Natural killer cell (primary cell): ENCODE measurements at regions of chr19 and their contacts with region 1.

Region 1: DNA sequence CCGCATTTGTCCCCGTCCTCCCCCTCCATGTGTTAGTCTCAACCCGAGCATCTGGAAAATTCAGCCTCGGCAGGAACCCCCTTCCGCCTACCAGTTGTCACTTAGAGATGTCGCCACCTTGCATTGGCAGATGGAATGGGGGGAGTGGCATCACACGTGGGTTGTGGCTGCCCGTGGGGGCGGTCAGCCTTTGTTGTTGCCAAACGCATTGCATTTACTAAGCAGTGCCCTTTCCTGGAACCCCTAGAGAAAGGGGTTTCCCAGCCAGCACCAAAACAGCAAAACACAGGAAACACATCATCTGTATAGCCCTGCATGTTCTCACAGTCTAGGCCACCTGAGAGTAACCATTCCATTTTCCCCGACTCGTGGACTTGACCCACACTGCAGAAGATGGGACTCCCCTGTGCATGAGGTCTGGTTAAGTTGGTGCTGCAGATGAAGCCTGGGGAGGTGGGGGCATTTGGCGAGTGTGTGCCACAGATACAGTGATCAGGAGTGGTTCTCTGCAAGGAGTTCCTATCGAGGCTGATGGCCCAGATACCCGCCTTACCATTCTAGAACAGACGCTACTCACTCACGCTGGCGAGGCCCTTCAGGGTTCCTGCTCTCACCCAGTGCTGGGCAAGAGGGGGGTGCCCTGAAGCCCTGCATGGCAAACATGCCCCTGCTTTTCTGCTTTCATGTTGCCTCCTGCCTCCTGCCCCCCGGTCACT is 38.3 kb downstream of the TMED1 start:
- DNase-seq: peak; percentile 94 to 96
- ATAC-seq: peak; percentile 77 to 91 (median 78)
- H3K4me3 ChIP-seq: peak overlapping the region; percentile 20
- H3K4me3 Mint-ChIP-seq: peak overlapping the region; percentile 96
- H3K27ac ChIP-seq: peak overlapping the region; percentile 98
- H3K27ac Mint-ChIP-seq: peak overlapping the region; percentile 93 to 100
- H3K4me1 ChIP-seq: peaks cover 69% of the 10 kb centered on the region
- H3K4me1 Mint-ChIP-seq: peaks cover 47 to 54% of the 10 kb centered on the region in 2 donors
- H3K27me3 ChIP-seq: no peaks in the 10 kb centered on the region
- H3K27me3 Mint-ChIP-seq: no peaks in the 10 kb centered on the region
- CTCF ChIP-seq: no peak

Region 2: DNA sequence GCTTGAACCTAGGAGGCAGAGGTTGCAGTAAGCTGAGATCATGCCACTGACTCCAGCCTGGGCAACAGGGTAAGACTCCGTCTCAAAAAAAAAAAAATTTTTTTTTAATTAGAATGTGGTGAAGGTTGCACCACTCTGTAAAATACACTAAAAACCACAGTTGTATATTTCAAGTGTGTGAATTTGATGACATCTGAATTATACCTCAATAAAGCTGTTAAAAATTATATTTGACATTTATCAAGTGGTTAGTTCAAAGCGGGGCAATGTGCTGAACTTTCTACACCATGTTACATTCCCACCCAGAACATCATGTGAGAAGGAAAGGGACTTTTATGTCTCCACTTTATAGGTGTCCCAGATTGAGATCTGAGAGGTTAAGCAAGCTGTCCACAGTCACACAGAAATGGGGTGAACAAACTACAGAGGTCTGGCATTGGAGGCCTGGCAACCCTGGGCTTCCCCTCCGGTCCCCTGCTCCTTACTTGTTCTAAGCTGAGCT is 274.5 kb before region 1 on chr19:
- intact Hi-C with region 1: loop called (anchors 1 kb)
- DNase-seq: peak; percentile 57 to 82
- ATAC-seq: peak; percentile 65 to 88 (median 80)
- H3K4me3 ChIP-seq: no peak overlapping the region
- H3K4me3 Mint-ChIP-seq: peak overlapping the region; percentile 76
- H3K27ac ChIP-seq: peak overlapping the region; percentile 92
- H3K27ac Mint-ChIP-seq: peak overlapping the region; percentile 86 to 91
- H3K4me1 ChIP-seq: peaks cover 65% of the 10 kb centered on the region
- H3K4me1 Mint-ChIP-seq: peaks cover 41 to 42% of the 10 kb centered on the region in 2 donors
- H3K27me3 ChIP-seq: no peaks in the 10 kb centered on the region
- H3K27me3 Mint-ChIP-seq: no peaks in the 10 kb centered on the region
- CTCF ChIP-seq: no peak

Region 3: GRCh38 chr19:10653715-10654492 is 143.8 kb before region 1 on chr19 and contains the start of gene ILF3:
- intact Hi-C with region 1: loop called (anchors 1 kb)
- DNase-seq: peak; percentile 100
- ATAC-seq: peak; percentile 75 to 93 (median 76)
- H3K4me3 ChIP-seq: peak within 1 kb of the TSS; percentile 100
- H3K4me3 Mint-ChIP-seq: peak within 1 kb of the TSS; percentile 91
- H3K27ac ChIP-seq: peak within 1 kb of the TSS; percentile 100
- H3K27ac Mint-ChIP-seq: peak within 1 kb of the TSS; percentile 97 to 98
- H3K4me1 ChIP-seq: peaks cover 39% of the 10 kb centered on the region
- H3K4me1 Mint-ChIP-seq: peaks cover 31 to 40% of the 10 kb centered on the region in 2 donors
- H3K27me3 ChIP-seq: no peaks in the 10 kb centered on the region
- H3K27me3 Mint-ChIP-seq: no peaks in the 10 kb centered on the region
- CTCF ChIP-seq: no peak
- total RNA-seq, gene ILF3: 329 to 365 (median 332) TPM

Region 4: DNA sequence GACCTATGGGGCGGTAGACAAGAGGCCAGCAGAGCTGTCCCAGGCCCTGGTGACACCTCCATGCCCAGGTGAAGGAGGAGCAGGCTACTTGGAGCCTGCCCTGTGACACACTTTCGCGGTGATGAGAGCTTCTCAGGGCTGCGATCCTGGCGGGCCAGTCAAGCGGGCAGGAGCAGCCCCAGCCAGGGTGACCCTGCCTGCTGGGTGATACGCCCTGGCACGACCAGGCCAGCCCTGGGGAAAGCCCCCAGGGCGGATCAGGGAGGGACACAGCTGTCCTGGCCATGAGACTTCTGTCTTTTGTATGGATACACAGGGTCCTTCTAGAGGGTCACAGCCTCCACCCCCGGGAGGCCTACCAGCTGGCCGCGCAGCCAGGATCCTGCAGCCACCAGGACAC is 66.8 kb before region 1 on chr19:
- intact Hi-C with region 1: loop called (anchors 1 kb)
- DNase-seq: peak in 1 of 2 donors; percentile 36
- ATAC-seq: peak in 2 of 3 donors; percentile 22 to 27
- H3K4me3 ChIP-seq: no peak overlapping the region
- H3K4me3 Mint-ChIP-seq: peak overlapping the region; percentile 84
- H3K27ac ChIP-seq: peak overlapping the region; percentile 76
- H3K27ac Mint-ChIP-seq: peak overlapping the region; percentile 96 to 99
- H3K4me1 ChIP-seq: peaks cover 58% of the 10 kb centered on the region
- H3K4me1 Mint-ChIP-seq: peaks cover 28 to 32% of the 10 kb centered on the region in 2 donors
- H3K27me3 ChIP-seq: no peaks in the 10 kb centered on the region
- H3K27me3 Mint-ChIP-seq: no peaks in the 10 kb centered on the region
- CTCF ChIP-seq: no peak

Region 5: GRCh38 chr19:10815969-10816692 is 18.4 kb after region 1 on chr19:
- intact Hi-C with region 1: loop called (anchors 1 kb)
- DNase-seq: no peak
- ATAC-seq: no peak
- H3K4me3 ChIP-seq: no peak overlapping the region
- H3K4me3 Mint-ChIP-seq: no peak overlapping the region
- H3K27ac ChIP-seq: peak overlapping the region; percentile 56
- H3K27ac Mint-ChIP-seq: peak overlapping the region; percentile 92 to 93
- H3K4me1 ChIP-seq: peaks cover 63% of the 10 kb centered on the region
- H3K4me1 Mint-ChIP-seq: peaks cover 31 to 75% of the 10 kb centered on the region in 2 donors
- H3K27me3 ChIP-seq: no peaks in the 10 kb centered on the region
- H3K27me3 Mint-ChIP-seq: no peaks in the 10 kb centered on the region
- CTCF ChIP-seq: no peak

Region 6: DNA sequence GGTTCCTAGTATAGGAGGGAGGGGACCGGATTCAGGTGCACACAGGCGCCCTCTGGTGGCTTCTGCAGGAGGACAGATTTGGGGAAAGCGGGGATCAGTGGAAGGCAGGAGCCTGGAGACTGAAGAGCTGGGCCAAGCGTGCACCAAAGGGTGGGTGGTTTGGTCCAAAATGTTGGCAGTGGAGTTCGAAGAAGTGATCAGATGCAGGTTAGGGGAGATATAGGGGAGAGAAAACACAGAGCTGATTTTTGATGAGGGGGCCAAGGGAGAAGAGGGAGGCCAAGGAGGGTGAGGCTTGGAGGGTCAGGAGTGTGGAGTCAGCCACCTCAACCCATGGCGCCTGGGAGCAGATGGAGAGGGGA is 66.8 kb after region 1 on chr19:
- intact Hi-C with region 1: loop called (anchors 2 kb)
- DNase-seq: peak; percentile 75 to 90
- ATAC-seq: peak; percentile 87 to 93 (median 87)
- H3K4me3 ChIP-seq: no peak overlapping the region
- H3K4me3 Mint-ChIP-seq: peak overlapping the region; percentile 5
- H3K27ac ChIP-seq: no peak overlapping the region
- H3K27ac Mint-ChIP-seq: peak overlapping the region in 1 of 2 donors; percentile 68
- H3K4me1 ChIP-seq: peaks cover 18% of the 10 kb centered on the region
- H3K4me1 Mint-ChIP-seq: peaks cover 9 to 10% of the 10 kb centered on the region in 2 donors
- H3K27me3 ChIP-seq: no peaks in the 10 kb centered on the region
- H3K27me3 Mint-ChIP-seq: no peaks in the 10 kb centered on the region
- CTCF ChIP-seq: peak; percentile 90

Region 7: DNA sequence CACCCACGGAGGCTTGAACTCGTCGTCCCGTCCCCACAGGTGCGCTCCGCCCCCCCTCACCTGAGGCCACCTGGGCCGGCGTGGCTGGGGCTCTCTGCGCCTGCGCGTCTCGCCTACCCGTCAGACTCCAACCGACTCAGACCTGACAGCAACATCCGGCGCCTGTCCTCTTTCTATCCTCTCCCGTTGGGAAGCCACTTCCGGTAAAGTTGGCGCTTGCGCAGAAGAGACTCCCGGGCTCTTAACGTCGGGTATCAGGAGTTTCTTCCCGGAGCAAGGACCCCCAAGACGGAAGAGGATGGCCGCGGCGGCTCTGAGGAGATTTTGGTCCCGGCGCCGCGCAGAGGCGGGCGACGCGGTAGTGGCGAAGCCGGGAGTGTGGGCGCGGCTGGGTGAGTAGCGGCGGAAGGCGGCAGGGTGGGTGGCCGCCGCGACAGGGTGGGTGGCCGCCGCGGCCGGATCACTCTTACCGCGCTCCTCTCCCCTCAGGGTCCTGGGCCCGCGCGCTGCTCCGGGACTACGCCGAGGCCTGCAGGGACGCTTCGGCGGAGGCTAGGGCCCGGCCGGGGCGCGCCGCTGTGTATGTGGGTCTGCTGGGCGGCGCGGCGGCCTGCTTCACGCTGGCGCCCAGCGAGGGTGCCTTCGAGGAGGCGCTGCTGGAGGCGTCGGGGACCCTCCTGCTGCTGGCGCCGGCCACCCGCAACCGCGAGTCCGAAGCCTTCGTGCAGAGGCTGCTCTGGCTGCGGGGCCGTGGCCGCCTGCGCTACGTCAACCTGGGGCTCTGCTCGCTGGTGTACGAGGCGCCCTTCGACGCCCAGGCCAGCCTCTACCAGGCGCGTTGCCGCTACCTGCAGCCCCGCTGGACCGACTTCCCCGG is 131.1 kb after region 1 on chr19 and contains the starts of genes TIMM29 and YIPF2:
- intact Hi-C with region 1: no loop called
- DNase-seq: peak; percentile 75 to 97
- ATAC-seq: peak; percentile 80 to 86 (median 84)
- H3K4me3 ChIP-seq: peak within 1 kb of the TSS; percentile 89
- H3K4me3 Mint-ChIP-seq: peak within 1 kb of the TSS; percentile 92
- H3K27ac ChIP-seq: peak within 1 kb of the TSS; percentile 69
- H3K27ac Mint-ChIP-seq: peak within 1 kb of the TSS; percentile 74 to 89
- H3K4me1 ChIP-seq: peaks cover 26% of the 10 kb centered on the region
- H3K4me1 Mint-ChIP-seq: peaks cover 7 to 34% of the 10 kb centered on the region in 2 donors
- H3K27me3 ChIP-seq: no peaks in the 10 kb centered on the region
- H3K27me3 Mint-ChIP-seq: no peaks in the 10 kb centered on the region
- CTCF ChIP-seq: no peak
- total RNA-seq, gene TIMM29: 20.7 to 30.9 (median 24.1) TPM
- total RNA-seq, gene YIPF2: 26.4 to 27.8 (median 27.2) TPM